ENCODE measurements at regions of chr2 and their contacts with region 1.

Region 1: DNA sequence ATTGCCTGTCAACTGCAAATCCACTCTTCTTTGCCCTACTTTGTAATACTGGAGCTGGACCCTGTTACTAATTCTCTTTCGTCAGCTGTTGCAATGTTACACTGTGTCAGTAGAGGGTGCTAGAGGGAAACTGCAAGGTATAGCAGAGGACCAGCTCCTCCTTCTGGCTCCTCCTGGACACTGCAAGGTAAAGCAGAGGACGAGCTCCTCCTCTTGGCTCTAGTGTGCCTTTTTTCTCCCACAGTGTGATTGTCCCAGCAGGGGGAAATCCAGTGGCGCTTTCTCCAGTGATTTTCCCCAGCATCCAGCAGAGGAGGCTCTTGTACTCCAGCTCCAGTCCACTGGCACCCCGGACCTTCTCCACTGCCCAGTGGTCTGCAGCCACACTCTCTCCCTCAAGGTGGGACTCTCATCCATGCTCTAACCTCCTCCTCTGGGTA is 95.6 kb downstream of the CAPN13 start:
- DNase-seq: peak; percentile 81
- CTCF ChIP-seq: peak; percentile 100

Region 2: GRCh38 chr2:30089171-30089570 is 622.5 kb before region 1 on chr2:
- CTCF ChIA-PET with region 1: interaction called, 10 read pairs
- POLR2A ChIA-PET with region 1: interaction called, 3 read pairs
- DNase-seq: no peak
- CTCF ChIP-seq: no peak

Region 3: GRCh38 chr2:30165050-30165520 is 546.6 kb before region 1 on chr2:
- CTCF ChIA-PET with region 1: interaction called, 667 read pairs
- POLR2A ChIA-PET with region 1: interaction called, 4 read pairs
- DNase-seq: peak; percentile 77
- CTCF ChIP-seq: peak; percentile 73

Region 4: DNA sequence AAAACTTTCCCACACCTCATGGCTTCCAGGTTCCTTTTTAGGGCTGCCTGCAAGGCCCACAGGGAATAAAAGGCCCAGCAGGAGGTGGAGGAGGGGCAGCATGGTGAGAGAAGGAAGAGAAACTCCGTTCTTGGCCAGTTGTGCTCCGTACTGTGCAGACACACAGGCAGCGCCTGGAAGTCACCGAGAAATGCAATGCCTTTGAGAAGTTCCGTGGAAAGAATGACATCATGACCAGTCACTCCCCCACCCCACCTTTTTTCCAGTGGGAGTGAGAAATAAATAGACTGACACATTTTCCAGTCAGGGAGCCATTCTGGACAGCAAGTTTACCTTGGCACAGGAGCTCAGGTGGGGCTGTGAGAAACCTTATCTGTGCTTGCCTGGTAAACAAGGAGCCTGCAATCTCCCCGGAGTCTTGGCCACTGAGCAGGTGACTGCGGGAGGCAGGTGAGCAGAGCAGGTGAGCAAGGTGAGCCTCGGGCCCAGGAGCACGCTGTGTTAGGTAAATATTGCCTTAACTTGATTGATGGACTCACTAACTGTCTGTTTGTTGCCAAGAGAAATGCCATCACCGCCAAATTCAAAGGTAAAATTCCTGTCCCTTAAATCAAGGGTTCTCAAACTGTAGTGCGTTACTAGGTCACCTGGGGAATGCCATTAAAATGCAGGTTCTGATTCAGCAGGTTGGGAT is 493.9 kb before region 1 on chr2:
- CTCF ChIA-PET with region 1: interaction called, 17 read pairs
- POLR2A ChIA-PET with region 1: no interaction called
- DNase-seq: no peak
- CTCF ChIP-seq: no peak

Region 5: DNA sequence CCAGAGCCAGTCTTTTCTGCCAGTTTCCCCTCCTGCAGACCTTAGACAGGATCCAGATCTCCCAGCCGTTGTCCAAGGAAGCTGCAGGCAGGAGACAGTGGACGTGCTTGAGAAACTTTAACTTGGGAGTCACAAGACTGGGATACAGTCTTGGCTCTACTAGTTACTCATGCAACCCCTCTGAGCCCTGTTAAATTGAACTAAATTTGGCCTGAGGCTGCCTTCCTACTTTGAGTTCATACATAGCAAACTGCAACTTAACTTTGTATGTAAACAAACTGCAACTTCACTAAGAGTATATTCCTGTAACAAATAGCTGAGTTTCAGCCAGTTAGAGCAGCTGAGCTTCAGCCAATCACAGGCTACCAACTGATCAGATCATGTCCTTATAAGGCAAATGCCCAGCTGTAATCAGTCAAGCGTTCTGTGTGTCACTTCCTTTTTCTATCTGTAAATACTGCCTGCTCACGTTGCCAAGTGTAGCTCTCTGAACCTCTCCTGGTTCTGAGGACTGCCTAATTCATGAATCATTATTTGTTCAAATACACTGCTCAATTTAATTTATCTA is 45.3 kb before region 1 on chr2:
- CTCF ChIA-PET with region 1: interaction called, 10 read pairs
- POLR2A ChIA-PET with region 1: no interaction called
- DNase-seq: no peak
- CTCF ChIP-seq: no peak

Region 6: GRCh38 chr2:31170071-31170698 is 458.5 kb after region 1 on chr2:
- CTCF ChIA-PET with region 1: interaction called, 102 read pairs
- POLR2A ChIA-PET with region 1: no interaction called
- DNase-seq: peak; percentile 72
- CTCF ChIP-seq: peak; percentile 90